Heart right ventricle (tissue), 16 donors: ENCODE measurements at regions of chr2 and their contacts with region 1.

Region 1: DNA sequence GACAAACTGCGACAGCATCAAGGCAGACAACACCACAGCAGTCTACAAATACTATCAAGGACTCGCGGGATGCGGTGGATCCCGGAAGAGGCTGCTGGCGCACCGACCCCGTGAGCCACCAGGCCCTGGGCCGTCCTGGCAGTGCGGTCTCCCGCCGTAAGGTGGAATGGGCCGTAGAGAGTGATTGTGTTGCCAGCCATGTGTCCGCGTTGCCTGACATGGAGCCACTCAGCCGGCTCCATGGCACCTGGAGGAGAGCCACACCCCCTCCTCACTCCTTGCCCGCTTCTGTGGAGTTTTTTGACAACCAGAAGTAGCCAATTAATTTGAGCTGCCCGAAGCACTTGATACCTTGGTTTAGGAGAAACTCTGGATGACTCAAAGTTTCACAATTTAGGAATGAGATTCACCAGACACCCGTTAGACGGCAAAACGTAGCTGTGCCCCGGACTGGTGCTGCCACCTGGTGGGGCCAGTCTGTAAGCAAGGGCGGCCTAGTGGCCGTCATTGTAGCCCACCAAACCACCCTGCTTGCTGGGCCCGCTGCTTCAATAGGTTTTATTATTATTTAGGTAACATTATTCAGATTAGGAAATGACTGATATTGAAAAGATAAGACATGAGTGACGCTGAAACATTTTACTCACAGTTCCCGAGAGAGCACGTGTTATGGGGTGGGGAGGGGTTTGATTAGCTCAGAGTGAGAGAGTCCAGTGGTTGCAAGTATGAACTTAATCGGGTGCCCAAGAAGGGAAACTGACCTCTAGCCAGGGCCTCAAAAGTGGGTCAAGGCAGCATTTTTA is 10.2 kb upstream of the IMP4 start:
- DNase-seq: peak; percentile 59 to 79
- ATAC-seq: peak; percentile 66 to 84 (median 74)
- H3K4me3 ChIP-seq: no peak overlapping the region
- H3K27ac ChIP-seq: no peak overlapping the region
- H3K4me1 ChIP-seq: peaks cover 0 to 13% (median 0%) of the 10 kb centered on the region in 9 donors
- H3K27me3 ChIP-seq: peaks cover 0 to 44% (median 37%) of the 10 kb centered on the region in 7 donors
- CTCF ChIP-seq: peak; percentile 84 to 97 (median 93)

Region 2: GRCh38 chr2:129936334-129936934 is 396.0 kb before region 1 on chr2:
- intact Hi-C with region 1: loop called in 4 of 10 experiments (anchors 5 kb)
- DNase-seq: peak in 1 of 2 donors; percentile 30
- ATAC-seq: peak in 1 of 8 donors; percentile 55
- H3K4me3 ChIP-seq: no peak overlapping the region
- H3K27ac ChIP-seq: no peak overlapping the region
- H3K4me1 ChIP-seq: peaks cover 0 to 7% (median 0%) of the 10 kb centered on the region in 9 donors
- H3K27me3 ChIP-seq: peaks cover 0 to 47% (median 32%) of the 10 kb centered on the region in 7 donors
- CTCF ChIP-seq: peak in 4 of 9 donors; percentile 49 to 77 (median 64)

Region 3: DNA sequence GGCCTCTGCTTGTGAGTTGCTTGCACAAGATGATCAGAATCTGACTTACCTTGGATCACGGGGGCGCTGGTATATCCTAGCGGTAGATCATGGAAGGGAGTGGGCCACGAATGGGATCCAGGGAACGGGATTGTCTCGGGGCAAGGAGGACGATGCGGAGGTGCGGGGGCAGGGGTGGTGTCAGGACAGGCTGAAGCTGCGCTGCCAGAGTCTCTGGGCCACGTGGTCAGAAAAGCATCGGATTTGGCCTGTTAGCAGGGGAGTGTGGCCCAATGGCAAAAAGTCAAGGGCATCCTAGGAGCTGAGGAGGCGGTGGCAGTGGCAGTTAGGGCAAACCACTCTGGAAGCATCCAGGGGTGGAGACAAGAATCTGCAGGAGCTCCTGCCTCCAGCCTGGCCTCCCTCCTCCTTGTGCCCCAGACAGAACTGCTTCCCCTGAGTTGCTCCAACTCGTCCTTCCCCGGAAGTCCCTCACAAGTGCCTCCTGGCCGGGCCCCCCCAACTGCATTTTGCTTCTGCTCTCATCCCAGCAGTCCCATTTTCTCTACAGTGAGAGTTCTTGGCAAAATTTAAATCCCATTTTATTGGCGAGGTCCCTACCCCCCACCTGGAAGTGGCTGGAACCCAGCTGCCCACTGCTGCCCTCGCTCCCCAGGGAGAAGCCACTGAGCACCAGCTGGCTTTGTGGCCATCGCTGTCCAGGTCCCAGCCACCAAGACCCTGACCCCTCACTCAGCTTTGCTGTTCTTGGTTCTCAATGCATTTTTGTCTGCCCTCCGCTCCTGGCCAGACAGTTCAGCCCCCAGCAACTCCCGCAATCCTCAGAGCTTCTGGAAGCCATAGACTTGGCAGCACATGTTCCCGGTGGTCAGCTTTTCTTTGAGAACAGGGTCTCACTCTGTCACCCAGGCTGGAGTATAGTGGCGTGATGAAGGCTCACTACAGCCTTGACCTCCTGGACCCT is 182.0 kb before region 1 on chr2:
- intact Hi-C with region 1: loop called in 6 of 10 experiments (anchors 5 to 10 kb)
- DNase-seq: no peak
- ATAC-seq: peak in 2 of 8 donors; percentile 4 to 7
- H3K4me3 ChIP-seq: no peak overlapping the region
- H3K27ac ChIP-seq: no peak overlapping the region
- H3K4me1 ChIP-seq: no peaks in the 10 kb centered on the region
- H3K27me3 ChIP-seq: peaks cover 0 to 19% (median 3%) of the 10 kb centered on the region in 7 donors
- CTCF ChIP-seq: no peak

Region 4: DNA sequence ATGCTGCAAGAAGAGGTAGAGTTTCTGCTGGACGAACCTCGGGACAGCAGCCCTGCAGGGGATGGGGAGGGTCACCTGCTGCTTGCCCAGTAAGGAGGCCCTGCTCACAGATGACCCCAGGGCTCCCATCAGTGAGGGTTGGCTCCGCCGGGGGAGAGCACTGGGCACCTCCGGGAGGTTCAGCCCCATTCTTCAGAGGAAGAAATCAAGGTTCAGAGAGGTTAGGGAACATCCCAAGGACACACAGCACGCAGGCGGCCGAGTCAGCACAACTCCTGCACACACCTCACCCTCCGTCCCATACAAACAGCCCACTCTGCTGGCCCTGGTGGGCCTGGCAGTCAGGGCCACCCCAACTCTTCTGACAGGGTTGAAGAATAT is 175.9 kb before region 1 on chr2:
- intact Hi-C with region 1: loop called in 7 of 10 experiments (anchors 2 to 10 kb)
- DNase-seq: no peak
- ATAC-seq: no peak
- H3K4me3 ChIP-seq: no peak overlapping the region
- H3K27ac ChIP-seq: no peak overlapping the region
- H3K4me1 ChIP-seq: peaks cover 0 to 2% (median 0%) of the 10 kb centered on the region in 9 donors
- H3K27me3 ChIP-seq: no peaks in the 10 kb centered on the region
- CTCF ChIP-seq: no peak

Region 5: DNA sequence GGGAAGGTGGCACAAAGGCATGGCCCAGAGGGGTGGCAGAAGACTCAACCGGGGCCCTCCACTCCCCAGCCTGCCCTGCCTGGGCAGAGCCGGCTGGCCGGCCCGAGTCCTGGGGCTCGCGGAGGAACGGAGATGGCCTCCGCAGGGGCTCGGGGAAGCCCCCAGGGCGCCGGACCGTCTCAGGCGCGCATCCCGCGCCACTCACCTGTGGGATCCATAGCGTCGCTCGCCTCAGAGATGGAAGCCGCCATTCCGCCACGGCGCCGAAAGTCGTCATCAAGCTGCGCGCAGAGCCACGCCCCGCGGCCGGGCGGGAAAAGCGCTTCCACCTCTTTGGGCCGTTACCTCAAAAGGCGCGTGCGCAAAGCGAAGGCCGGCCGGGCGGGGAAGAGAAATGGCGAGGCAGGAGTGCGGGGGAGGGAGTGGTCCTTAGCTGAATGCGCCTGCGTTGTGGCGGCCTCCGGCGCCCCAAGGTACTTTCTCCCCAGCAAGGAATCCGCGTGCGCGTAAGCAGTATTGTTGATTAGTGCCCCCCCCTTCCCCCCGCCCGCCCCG is 151.1 kb before region 1 on chr2 and contains the start of gene SMPD4:
- intact Hi-C with region 1: loop called in 7 of 10 experiments (anchors 5 to 10 kb)
- DNase-seq: peak; percentile 98 to 99
- ATAC-seq: peak; percentile 90 to 98 (median 94)
- H3K4me3 ChIP-seq: peak within 1 kb of the TSS; percentile 77 to 99 (median 94)
- H3K27ac ChIP-seq: peak within 1 kb of the TSS; percentile 77 to 98 (median 92)
- H3K4me1 ChIP-seq: peaks cover 11 to 29% (median 23%) of the 10 kb centered on the region in 9 donors
- H3K27me3 ChIP-seq: no peaks in the 10 kb centered on the region
- CTCF ChIP-seq: no peak
- total RNA-seq, gene SMPD4: 21.9 to 33.6 (median 25.9) TPM

Region 6: DNA sequence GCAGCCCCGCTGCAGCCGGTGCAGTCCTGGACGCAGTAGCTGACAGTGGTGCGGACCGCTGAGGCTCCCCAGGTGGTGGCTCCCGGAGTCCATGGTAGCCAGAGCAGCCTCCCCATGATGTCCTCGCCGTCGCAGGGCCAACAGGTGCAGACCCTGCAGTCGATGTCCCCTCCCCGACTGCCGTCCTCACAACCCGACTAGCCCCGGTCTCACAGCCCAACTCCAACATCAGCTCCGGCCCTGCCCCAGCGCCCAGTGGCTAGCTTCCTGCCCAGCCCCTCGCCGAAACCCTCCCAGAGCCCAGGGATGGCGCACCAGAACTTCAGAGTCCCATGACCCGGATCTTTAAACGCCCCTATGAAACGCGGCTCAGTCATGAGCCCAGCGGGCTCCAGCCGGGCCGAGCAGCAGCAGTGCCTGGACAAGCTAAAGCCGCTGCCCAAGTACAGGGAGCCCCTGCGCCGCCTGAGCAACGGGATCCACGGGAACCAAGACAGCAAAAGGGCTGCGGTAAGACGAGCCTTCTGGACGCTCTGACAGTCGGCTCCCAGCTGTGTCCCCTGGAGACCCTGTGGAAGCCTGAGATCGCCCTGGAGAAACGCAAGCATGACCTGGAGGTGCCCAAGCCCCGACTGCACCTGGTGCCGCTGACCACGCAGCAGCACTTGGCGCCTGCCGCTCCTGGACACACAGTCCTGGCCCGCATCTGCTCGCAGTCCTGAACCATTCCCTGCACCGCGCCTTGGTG is 80.4 kb before region 1 on chr2:
- intact Hi-C with region 1: no loop called
- DNase-seq: no peak
- ATAC-seq: peak in 4 of 8 donors; percentile 27 to 81 (median 56)
- H3K4me3 ChIP-seq: peak overlapping the region in 7 of 10 donors; percentile 19 to 45 (median 37)
- H3K27ac ChIP-seq: no peak overlapping the region
- H3K4me1 ChIP-seq: peaks cover 0 to 7% (median 0%) of the 10 kb centered on the region in 9 donors
- H3K27me3 ChIP-seq: peaks cover 0 to 79% (median 54%) of the 10 kb centered on the region in 7 donors
- CTCF ChIP-seq: no peak

Region 7: GRCh38 chr2:130261970-130262760 is 70.3 kb before region 1 on chr2:
- intact Hi-C with region 1: no loop called
- DNase-seq: no peak
- ATAC-seq: no peak
- H3K4me3 ChIP-seq: no peak overlapping the region
- H3K27ac ChIP-seq: no peak overlapping the region
- H3K4me1 ChIP-seq: peaks cover 0 to 4% (median 0%) of the 10 kb centered on the region in 9 donors
- H3K27me3 ChIP-seq: peaks cover 0 to 51% (median 11%) of the 10 kb centered on the region in 7 donors
- CTCF ChIP-seq: no peak